HEK293T (cell line): ENCODE measurements at regions of chr14 and their contacts with region 1.

Region 1: GRCh38 chr14:34982417-34983147 is at the start of gene SRP54:
- DNase-seq: peak; percentile 98

Region 2: DNA sequence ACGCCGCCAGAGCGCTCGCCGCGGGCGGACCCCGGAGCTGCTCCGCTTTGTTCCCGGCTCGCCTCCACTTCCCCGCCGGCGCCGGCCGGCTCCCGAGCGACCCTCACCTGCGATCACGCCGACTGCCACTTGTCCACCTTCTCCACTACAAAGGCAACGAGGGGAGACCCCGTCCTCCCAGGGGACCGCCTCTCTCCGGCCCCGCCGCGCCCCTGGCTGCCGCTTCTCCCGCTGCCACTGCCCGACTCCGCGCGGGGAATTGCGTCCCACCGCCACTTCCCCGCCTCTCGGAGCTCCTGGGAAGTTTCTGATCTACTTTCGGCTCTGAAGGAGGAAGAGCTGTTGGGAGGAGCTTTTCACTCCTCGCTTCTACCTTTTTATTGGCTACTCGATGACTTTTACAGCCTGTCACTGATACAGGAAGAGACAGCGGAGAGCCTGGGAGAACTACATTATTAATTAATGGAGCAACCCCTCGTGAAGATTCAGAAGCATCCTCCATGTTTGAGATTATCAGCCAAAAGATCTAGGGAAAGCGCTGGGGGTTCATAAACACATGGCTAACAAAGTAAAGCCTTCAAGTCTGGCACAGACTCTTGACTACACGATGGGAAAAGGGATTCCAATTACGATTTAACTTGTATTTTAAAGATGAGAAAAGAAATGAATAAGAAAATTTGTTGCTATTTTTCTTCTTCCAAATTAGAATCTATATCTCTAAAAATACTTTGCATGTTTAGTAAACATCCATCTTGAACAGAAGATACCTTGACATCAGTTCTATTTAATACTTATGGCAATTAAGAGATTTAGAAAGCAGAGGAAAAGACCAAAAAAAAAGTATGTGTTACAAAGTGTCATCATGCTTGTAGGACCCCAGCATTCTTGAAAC is 107.3 kb before region 1 on chr14 and contains the start of gene BAZ1A:
- CTCF ChIA-PET with region 1: no interaction called
- POLR2A ChIA-PET with region 1: interaction called, 16 read pairs
- DNase-seq: peak; percentile 68

Region 3: GRCh38 chr14:34993426-34993825 is 10.8 kb after region 1 on chr14:
- CTCF ChIA-PET with region 1: no interaction called
- POLR2A ChIA-PET with region 1: interaction called, 10 read pairs
- DNase-seq: no peak

Region 4: DNA sequence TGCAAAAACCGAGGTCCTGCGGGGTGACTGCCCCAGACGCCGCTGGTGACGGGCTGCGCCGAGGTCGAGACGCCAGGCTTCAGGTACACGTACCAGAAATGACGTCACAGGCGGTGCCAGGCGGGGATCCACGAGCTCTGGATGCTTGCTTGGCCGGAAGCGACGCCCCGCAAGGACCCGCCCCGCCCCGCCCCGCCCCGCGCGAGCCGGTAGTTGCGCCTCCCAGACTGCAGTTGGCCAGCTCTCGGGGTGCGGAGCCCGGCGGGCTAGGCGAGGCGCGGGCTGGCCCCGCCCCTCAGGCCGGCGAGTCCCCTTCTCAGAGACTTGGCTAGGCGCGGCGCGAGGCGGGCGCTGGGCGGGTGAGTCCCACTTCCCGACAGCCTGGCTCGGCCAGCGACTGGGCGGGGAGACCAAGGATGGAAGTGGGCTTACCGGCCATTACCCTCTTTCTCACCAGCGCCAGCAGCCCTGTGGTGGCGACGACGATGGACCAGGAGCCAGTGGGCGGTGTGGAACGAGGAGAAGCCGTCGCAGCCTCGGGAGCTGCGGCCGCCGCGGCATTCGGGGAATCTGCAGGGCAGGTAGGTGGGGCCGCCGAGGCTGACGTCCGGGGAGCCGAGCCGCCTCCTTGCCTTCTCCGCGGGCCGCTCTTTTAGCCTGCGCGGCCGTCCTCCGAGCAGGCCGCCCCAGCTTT is 63.6 kb after region 1 on chr14 and contains the start of gene FAM177A1:
- CTCF ChIA-PET with region 1: no interaction called
- POLR2A ChIA-PET with region 1: interaction called, 37 read pairs
- DNase-seq: peak; percentile 94

Region 5: DNA sequence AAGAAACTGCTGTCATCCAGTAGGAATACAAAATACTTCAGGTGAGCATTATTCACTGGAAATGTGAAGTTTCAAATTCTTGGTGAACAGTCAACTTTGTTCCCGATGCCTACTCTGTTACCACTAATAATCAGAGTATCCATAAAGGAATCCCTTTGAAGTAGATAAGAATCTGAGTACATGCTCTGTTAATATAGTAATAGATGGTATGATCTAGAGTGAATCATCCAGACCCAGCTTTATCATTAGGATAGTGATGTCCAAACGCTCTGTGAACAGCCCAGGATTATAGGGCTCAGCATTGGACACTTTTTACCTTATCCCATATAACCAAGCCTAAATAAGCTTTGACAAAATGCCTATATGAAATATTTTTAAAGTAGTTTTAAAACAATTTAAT is 105.9 kb after region 1 on chr14:
- CTCF ChIA-PET with region 1: no interaction called
- POLR2A ChIA-PET with region 1: no interaction called
- DNase-seq: no peak

Region 6: GRCh38 chr14:35121887-35122695 is 139.5 kb after region 1 on chr14 and contains the starts of genes PPP2R3C and PRORP:
- CTCF ChIA-PET with region 1: no interaction called
- POLR2A ChIA-PET with region 1: interaction called, 14 read pairs
- DNase-seq: peak; percentile 78